ENCODE measurements at regions of chr1 and their contacts with region 1.

Region 1: DNA sequence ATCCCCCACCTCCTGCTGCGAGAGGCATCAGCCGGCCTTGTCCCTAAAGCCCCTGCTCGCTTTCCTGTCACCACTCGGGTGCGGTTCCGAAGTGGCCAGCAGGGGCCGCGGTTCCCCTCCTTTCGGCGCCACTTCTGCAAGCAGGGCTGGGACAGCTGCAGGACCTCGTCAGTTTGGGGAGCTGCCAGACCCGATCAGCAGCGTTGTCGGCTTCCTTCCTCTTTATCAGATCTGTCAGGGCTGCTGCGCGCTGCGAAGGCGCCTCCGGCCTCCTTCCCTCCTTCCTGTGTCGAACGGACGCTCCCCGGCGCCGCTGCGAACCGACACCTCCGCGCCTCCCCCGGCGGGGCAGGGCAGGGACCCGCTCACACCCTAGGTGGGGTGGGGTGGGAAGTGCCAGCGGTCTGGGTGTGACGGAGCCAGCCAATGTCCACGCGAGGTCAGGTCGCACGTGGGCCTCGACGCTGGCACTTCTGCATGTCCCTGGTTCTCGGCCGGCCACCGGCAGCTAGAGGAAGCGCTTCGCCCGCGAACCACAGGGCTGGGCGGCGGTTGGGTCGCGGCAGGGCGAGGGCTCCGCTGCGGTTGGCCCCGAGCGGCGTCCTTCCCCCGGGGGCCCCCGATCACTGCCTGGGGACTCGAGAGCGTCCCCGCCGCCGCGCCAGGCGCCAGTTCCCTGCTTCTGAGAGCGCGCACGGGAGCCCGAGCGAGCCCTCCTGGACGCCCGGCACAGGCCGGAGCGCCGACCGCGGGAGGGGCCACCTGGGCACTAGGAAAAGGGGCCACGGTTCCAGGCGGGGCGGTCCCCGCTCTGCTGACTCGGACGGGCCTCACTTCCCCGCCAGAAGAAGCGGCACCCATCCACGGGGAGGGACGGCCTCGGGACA is 81.8 kb downstream of the RUNX3 start:
- DNase-seq: peak; percentile 90
- H3K4me3 ChIP-seq: peak overlapping the region; percentile 31 to 43 (median 42)
- H3K27ac ChIP-seq: peak overlapping the region; percentile 74
- H3K4me1 ChIP-seq: peaks cover 23% of the 10 kb centered on the region
- H3K27me3 ChIP-seq: no peaks in the 10 kb centered on the region
- CTCF ChIP-seq: peak; percentile 95 to 98
- POLR2A ChIP-seq: peak; percentile 53

Region 2: GRCh38 chr1:24642481-24643361 is 205.5 kb before region 1 on chr1 and contains the start of gene SRRM1:
- CTCF ChIA-PET with region 1: no interaction called
- POLR2A ChIA-PET with region 1: no interaction called
- dilution Hi-C with region 1: no loop called
- intact Hi-C with region 1: loop called (anchors 1 kb)
- DNase-seq: peak; percentile 100
- H3K4me3 ChIP-seq: peak within 1 kb of the TSS; percentile 81 to 100 (median 81)
- H3K27ac ChIP-seq: peak within 1 kb of the TSS; percentile 84
- H3K4me1 ChIP-seq: peaks cover 18% of the 10 kb centered on the region
- H3K27me3 ChIP-seq: peaks cover 0 to under 1% of the 10 kb centered on the region in 2 experiments
- CTCF ChIP-seq: no peak
- POLR2A ChIP-seq: peak; percentile 98
- total RNA-seq, gene SRRM1: 157 and 163 TPM in 2 replicates

Region 3: GRCh38 chr1:24872061-24872850 is 24.0 kb after region 1 on chr1:
- CTCF ChIA-PET with region 1: no interaction called
- POLR2A ChIA-PET with region 1: no interaction called
- dilution Hi-C with region 1: no loop called
- intact Hi-C with region 1: no loop called
- DNase-seq: no peak
- H3K4me3 ChIP-seq: no peak overlapping the region
- H3K27ac ChIP-seq: no peak overlapping the region
- H3K4me1 ChIP-seq: no peaks in the 10 kb centered on the region
- H3K27me3 ChIP-seq: peaks cover 7 to 16% of the 10 kb centered on the region in 2 experiments
- CTCF ChIP-seq: no peak
- POLR2A ChIP-seq: no peak

Region 4: GRCh38 chr1:24897767-24898483 is 49.7 kb after region 1 on chr1:
- CTCF ChIA-PET with region 1: interaction called, 37 read pairs
- POLR2A ChIA-PET with region 1: no interaction called
- dilution Hi-C with region 1: no loop called
- intact Hi-C with region 1: loop called (anchors 1 kb)
- DNase-seq: peak; percentile 46
- H3K4me3 ChIP-seq: no peak overlapping the region
- H3K27ac ChIP-seq: no peak overlapping the region
- H3K4me1 ChIP-seq: no peaks in the 10 kb centered on the region
- H3K27me3 ChIP-seq: peaks cover 0 to 5% of the 10 kb centered on the region in 2 experiments
- CTCF ChIP-seq: peak; percentile 79 to 93
- POLR2A ChIP-seq: no peak

Region 5: DNA sequence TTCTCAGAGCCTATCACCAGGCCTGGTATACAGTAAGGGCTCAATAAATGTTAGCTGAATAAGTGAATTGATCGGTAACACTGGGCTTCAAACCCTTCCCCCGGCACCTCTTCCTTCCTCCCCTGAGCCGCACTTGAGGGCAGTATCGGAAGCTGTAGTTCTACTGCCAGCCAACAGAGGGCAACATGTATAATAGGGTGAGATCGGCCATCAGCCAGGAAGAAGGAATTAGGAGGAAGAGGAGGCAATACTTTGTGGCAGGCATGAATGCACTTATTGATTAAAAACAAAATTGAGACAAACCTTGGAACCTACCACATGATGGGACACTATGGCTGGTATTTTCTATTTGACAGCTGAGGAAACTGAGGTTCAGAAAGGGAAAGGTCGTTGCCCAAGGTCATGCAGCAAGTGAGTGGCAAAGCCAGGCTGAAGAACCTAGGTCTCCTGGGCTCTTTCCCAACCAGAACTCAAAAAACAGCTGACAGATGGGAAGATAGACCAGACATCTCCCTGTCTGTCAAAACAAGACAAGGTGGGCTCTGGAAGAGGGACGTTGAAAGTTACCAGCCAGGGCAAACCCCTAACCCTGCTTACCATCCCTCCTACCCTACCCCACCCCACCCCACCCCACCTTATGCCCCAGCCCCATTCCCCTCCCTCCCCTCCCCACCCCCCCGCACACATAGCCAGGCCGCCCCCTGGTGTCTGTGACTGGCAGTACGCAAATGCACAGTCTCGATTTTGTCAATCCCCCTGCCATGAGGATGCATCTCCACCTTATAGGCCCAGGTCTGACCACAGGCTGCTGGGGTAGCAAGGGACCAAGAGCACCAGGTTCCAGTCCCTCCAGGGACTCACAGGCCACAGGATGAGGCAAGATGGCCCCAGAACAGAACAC is 189.2 kb after region 1 on chr1:
- CTCF ChIA-PET with region 1: interaction called, 11 read pairs
- POLR2A ChIA-PET with region 1: no interaction called
- dilution Hi-C with region 1: no loop called
- intact Hi-C with region 1: loop called (anchors 1 kb)
- DNase-seq: peak; percentile 19
- H3K4me3 ChIP-seq: no peak overlapping the region
- H3K27ac ChIP-seq: no peak overlapping the region
- H3K4me1 ChIP-seq: no peaks in the 10 kb centered on the region
- H3K27me3 ChIP-seq: no peaks in the 10 kb centered on the region
- CTCF ChIP-seq: peak; percentile 52 to 56
- POLR2A ChIP-seq: no peak

Region 6: DNA sequence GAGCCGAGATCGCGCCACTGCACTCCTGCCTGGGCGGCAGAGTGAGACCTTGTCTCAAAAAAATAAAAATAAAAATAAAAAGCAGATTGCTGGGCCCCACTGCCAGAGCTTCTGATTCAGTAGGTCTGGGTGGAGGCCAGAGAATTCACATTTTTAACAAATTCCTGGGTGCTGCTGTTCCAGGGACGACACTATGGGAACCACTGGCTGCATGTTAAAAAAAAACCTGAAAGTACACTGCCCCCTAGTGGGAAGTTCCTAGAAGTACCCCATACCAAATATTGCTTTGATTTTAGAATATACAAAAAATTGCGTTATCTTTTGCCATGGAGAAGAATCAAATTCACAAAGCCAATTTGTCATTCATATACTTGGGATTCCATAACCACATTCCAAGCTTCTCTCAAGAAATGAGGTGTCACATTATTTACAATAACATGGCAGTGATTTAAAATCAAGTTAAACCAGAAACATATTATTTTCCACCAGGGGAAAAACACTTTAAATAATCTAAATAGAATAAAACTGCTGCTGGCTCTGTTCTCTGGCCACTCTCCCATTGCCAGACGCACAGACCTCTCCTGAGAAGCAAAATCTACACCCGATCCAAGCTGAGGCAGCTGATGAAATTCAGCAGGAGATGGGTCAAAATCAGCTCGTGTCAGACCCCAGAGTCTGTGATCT is 356.7 kb after region 1 on chr1:
- CTCF ChIA-PET with region 1: interaction called, 3 read pairs
- POLR2A ChIA-PET with region 1: no interaction called
- dilution Hi-C with region 1: no loop called
- intact Hi-C with region 1: loop called (anchors 2 kb)
- DNase-seq: peak; percentile 21
- H3K4me3 ChIP-seq: no peak overlapping the region
- H3K27ac ChIP-seq: no peak overlapping the region
- H3K4me1 ChIP-seq: no peaks in the 10 kb centered on the region
- H3K27me3 ChIP-seq: peaks cover 0 to 6% of the 10 kb centered on the region in 2 experiments
- CTCF ChIP-seq: peak; percentile 57 to 61
- POLR2A ChIP-seq: no peak

Measured in endothelial cell of umbilical vein (primary cell).